Activated CD8-positive, alpha-beta T cell treated with anti-CD3 and anti-CD28 coated beads for 36 hours (primary cell): ENCODE measurements at regions of chr16 and their contacts with region 1.

Region 1: DNA sequence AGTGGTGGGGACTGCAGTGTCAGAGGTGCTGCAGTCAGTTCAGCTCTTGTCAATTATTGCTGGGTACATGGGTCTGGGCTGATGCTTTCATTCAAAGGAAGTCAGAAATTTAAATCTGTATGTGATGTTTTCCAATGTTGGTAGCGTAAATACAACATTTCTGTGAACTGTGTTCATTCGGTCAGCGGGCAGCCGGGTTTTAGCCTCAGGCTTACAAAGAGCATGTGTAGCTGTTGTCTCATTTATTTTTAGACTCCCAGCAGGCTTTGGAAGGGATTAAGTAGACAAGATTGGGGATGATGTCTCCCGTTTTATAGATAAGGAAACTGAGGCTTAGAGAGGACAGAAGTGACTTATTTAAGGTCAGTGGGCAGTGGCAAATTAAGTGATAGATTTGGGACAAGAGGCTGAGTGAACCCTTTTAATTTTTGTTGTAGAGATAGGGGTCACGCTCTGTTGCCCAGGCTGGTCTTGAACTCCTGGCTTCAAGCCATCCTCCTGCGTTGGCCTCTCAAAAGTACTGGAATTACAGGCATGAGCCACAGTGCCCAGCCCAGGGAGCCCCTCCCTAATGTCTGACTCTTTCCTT is 8.1 kb downstream of the AQP8 start:
- DNase-seq: no peak
- ATAC-seq: no peak
- H3K4me3 Mint-ChIP-seq: no peak overlapping the region
- H3K27ac Mint-ChIP-seq: no peak overlapping the region
- H3K4me1 Mint-ChIP-seq: no peaks in the 10 kb centered on the region
- H3K27me3 Mint-ChIP-seq: no peaks in the 10 kb centered on the region
- CTCF ChIP-seq: no peak

Region 2: GRCh38 chr16:25060920-25061319 is 163.9 kb before region 1 on chr16:
- CTCF ChIA-PET with region 1: interaction called, 14 read pairs
- POLR2A ChIA-PET with region 1: no interaction called
- intact Hi-C with region 1: no loop called
- DNase-seq: no peak
- ATAC-seq: peak; percentile 84
- H3K4me3 Mint-ChIP-seq: no peak overlapping the region
- H3K27ac Mint-ChIP-seq: peak overlapping the region; percentile 72
- H3K4me1 Mint-ChIP-seq: peaks cover 44% of the 10 kb centered on the region
- H3K27me3 Mint-ChIP-seq: no peaks in the 10 kb centered on the region
- CTCF ChIP-seq: no peak

Region 3: GRCh38 chr16:25118265-25119241 is 106.3 kb before region 1 on chr16:
- CTCF ChIA-PET with region 1: interaction called, 11 read pairs
- POLR2A ChIA-PET with region 1: interaction called, 3 read pairs
- intact Hi-C with region 1: no loop called
- DNase-seq: no peak
- ATAC-seq: no peak
- H3K4me3 Mint-ChIP-seq: no peak overlapping the region
- H3K27ac Mint-ChIP-seq: no peak overlapping the region
- H3K4me1 Mint-ChIP-seq: peaks cover 47% of the 10 kb centered on the region
- H3K27me3 Mint-ChIP-seq: no peaks in the 10 kb centered on the region
- CTCF ChIP-seq: no peak

Region 4: GRCh38 chr16:25126820-25127232 is 98.0 kb before region 1 on chr16:
- CTCF ChIA-PET with region 1: interaction called, 23 read pairs
- POLR2A ChIA-PET with region 1: no interaction called
- intact Hi-C with region 1: loop called (anchors 2 kb)
- DNase-seq: peak; percentile 66
- ATAC-seq: peak; percentile 86
- H3K4me3 Mint-ChIP-seq: no peak overlapping the region
- H3K27ac Mint-ChIP-seq: no peak overlapping the region
- H3K4me1 Mint-ChIP-seq: peaks cover 31% of the 10 kb centered on the region
- H3K27me3 Mint-ChIP-seq: no peaks in the 10 kb centered on the region
- CTCF ChIP-seq: peak; percentile 77

Region 5: GRCh38 chr16:25235991-25236390 is 11.2 kb after region 1 on chr16:
- CTCF ChIA-PET with region 1: interaction called, 54 read pairs
- POLR2A ChIA-PET with region 1: interaction called, 5 read pairs
- intact Hi-C with region 1: no loop called
- DNase-seq: no peak
- ATAC-seq: no peak
- H3K4me3 Mint-ChIP-seq: no peak overlapping the region
- H3K27ac Mint-ChIP-seq: no peak overlapping the region
- H3K4me1 Mint-ChIP-seq: no peaks in the 10 kb centered on the region
- H3K27me3 Mint-ChIP-seq: no peaks in the 10 kb centered on the region
- CTCF ChIP-seq: no peak

Region 6: GRCh38 chr16:25257956-25258823 is 33.4 kb after region 1 on chr16:
- CTCF ChIA-PET with region 1: interaction called, 14 read pairs
- POLR2A ChIA-PET with region 1: no interaction called
- intact Hi-C with region 1: no loop called
- DNase-seq: peak; percentile 84
- ATAC-seq: peak; percentile 52
- H3K4me3 Mint-ChIP-seq: peak overlapping the region; percentile 99
- H3K27ac Mint-ChIP-seq: peak overlapping the region; percentile 94
- H3K4me1 Mint-ChIP-seq: peaks cover 53% of the 10 kb centered on the region
- H3K27me3 Mint-ChIP-seq: no peaks in the 10 kb centered on the region
- CTCF ChIP-seq: no peak